GM12878 (cell line): ENCODE measurements at regions of chr16 and their contacts with region 1.

Region 1: DNA sequence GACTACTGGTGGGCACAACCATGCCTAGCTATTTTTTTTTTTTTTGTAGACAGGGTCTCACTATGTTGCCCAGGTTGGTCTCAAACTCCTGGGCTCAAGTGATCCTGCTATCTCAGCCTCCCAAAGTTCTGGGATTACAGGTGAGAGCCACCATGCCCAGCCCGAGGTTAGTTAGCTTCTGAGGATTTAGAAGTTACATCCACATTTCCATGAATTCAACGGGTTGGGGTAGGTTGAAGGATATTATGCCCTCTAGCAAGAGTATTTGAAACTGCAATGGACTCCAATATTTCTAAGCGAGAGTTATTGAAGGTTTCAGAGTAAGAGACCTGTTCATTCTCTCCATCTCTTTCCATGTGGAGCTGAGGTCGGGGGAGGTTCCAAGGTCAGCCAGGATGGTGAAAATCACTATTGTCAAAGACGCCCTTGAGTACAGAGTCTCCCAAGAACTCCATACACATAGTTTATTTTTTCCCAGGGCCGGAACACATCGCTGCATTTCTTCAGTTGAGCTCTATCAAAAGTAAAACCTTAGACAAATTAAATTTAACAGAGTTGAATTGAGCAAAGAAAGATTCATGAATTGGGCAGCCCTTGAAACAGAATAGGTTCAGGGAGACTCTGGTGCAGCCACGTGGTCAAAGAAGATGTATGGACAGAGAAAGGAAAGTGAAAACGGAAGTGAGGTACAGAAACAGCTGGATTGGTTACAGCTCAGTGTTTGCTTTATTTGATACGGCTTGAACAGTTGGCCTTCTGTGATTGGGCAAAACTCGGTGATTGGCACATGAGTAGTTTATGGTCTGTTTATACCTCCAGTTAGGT is 19.0 kb upstream of the ITPRIPL2 start:
- DNase-seq: no peak
- ATAC-seq: peak; percentile 88
- H3K4me3 ChIP-seq: no peak overlapping the region
- H3K27ac ChIP-seq: no peak overlapping the region
- H3K4me1 ChIP-seq: peaks cover 6% of the 10 kb centered on the region; the same call in 1 of the 2 replicates
- H3K27me3 ChIP-seq: no peaks in the 10 kb centered on the region
- CTCF ChIP-seq: no peak
- EP300 ChIP-seq: no peak
- POLR2A ChIP-seq: no peak
- RAD21 ChIP-seq: no peak

Region 2: GRCh38 chr16:18932243-18932981 is 162.3 kb before region 1 on chr16:
- CTCF ChIA-PET with region 1: no interaction called
- POLR2A ChIA-PET with region 1: no interaction called
- RAD21 ChIA-PET with region 1: no interaction called
- SMC1A ChIA-PET with region 1: no interaction called
- in situ Hi-C with region 1: no loop called
- intact Hi-C with region 1: no loop called
- DNase-seq: no peak
- ATAC-seq: no peak
- H3K4me3 ChIP-seq: no peak overlapping the region
- H3K27ac ChIP-seq: no peak overlapping the region
- H3K4me1 ChIP-seq: peaks cover 6% of the 10 kb centered on the region
- H3K27me3 ChIP-seq: no peaks in the 10 kb centered on the region
- CTCF ChIP-seq: no peak
- EP300 ChIP-seq: no peak
- POLR2A ChIP-seq: no peak
- RAD21 ChIP-seq: no peak

Region 3: GRCh38 chr16:19046062-19046461 is 48.7 kb before region 1 on chr16:
- CTCF ChIA-PET with region 1: no interaction called
- POLR2A ChIA-PET with region 1: no interaction called
- RAD21 ChIA-PET with region 1: no interaction called
- SMC1A ChIA-PET with region 1: no interaction called
- in situ Hi-C with region 1: no loop called
- intact Hi-C with region 1: no loop called
- DNase-seq: no peak
- ATAC-seq: no peak
- H3K4me3 ChIP-seq: no peak overlapping the region
- H3K27ac ChIP-seq: no peak overlapping the region
- H3K4me1 ChIP-seq: no peaks in the 10 kb centered on the region
- H3K27me3 ChIP-seq: no peaks in the 10 kb centered on the region
- CTCF ChIP-seq: no peak
- EP300 ChIP-seq: no peak
- POLR2A ChIP-seq: no peak
- RAD21 ChIP-seq: no peak

Region 4: GRCh38 chr16:19105891-19106624 is 11.3 kb after region 1 on chr16:
- CTCF ChIA-PET with region 1: interaction called, 7 read pairs
- POLR2A ChIA-PET with region 1: no interaction called
- RAD21 ChIA-PET with region 1: interaction called, 4 read pairs
- SMC1A ChIA-PET with region 1: interaction called, 34 read pairs
- in situ Hi-C with region 1: no loop called
- intact Hi-C with region 1: no loop called
- DNase-seq: no peak
- ATAC-seq: no peak
- H3K4me3 ChIP-seq: no peak overlapping the region
- H3K27ac ChIP-seq: no peak overlapping the region
- H3K4me1 ChIP-seq: peaks cover 24% of the 10 kb centered on the region
- H3K27me3 ChIP-seq: no peaks in the 10 kb centered on the region
- CTCF ChIP-seq: no peak
- EP300 ChIP-seq: no peak
- POLR2A ChIP-seq: no peak
- RAD21 ChIP-seq: no peak

Region 5: GRCh38 chr16:19162085-19162484 is 67.3 kb after region 1 on chr16:
- CTCF ChIA-PET with region 1: no interaction called
- POLR2A ChIA-PET with region 1: no interaction called
- RAD21 ChIA-PET with region 1: no interaction called
- SMC1A ChIA-PET with region 1: interaction called, 4 read pairs
- in situ Hi-C with region 1: loop called (anchors 5 kb)
- intact Hi-C with region 1: no loop called
- DNase-seq: no peak
- ATAC-seq: no peak
- H3K4me3 ChIP-seq: no peak overlapping the region
- H3K27ac ChIP-seq: no peak overlapping the region
- H3K4me1 ChIP-seq: no peaks in the 10 kb centered on the region
- H3K27me3 ChIP-seq: no peaks in the 10 kb centered on the region
- CTCF ChIP-seq: no peak
- EP300 ChIP-seq: no peak
- POLR2A ChIP-seq: no peak
- RAD21 ChIP-seq: no peak

Region 6: DNA sequence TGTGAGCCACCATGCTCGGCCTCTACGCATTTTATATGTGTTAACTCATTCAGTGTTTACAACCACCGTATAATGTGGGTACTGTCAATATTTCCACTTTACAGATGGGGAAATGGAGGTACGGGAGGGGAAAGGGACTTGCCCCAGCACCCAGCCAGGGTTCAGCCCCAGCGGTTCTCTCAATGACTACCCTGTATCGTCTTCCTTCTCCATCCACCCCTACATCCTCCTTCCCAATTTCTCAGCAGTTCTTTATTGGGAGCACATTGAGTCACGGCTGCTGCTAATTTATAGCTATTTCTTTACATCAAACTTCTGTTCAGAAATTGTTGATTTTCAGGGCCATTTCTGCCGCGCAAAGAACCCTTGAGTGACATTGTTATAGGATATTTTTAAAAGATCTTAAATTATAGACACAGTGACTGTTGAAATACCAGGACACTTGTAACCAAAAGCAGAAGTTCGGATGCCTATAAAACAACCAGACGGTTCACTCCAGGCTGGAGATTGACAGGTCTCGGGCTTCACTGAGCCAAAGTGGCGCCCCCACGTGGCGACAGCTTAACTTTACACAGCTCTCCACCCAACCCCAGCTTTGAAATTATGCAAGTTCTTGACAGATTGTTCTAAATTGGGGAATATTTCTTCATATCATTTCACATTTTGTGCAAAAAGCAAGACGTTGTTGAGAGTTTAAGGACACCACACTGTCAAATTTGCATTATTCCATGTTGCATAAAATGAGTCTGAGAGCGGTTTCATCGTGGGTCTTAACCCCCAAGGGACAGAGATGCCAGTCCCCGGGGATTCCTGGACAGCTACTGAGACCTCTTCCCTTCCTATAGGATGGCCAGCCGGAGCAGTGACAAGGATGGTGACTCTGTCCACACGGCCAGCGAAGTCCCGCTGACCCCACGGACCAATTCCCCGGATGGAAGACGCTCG is 85.1 kb after region 1 on chr16:
- CTCF ChIA-PET with region 1: interaction called, 17 read pairs
- POLR2A ChIA-PET with region 1: no interaction called
- RAD21 ChIA-PET with region 1: no interaction called
- SMC1A ChIA-PET with region 1: interaction called, 5 read pairs
- in situ Hi-C with region 1: no loop called
- intact Hi-C with region 1: no loop called
- DNase-seq: no peak
- ATAC-seq: peak; percentile 94
- H3K4me3 ChIP-seq: no peak overlapping the region
- H3K27ac ChIP-seq: no peak overlapping the region
- H3K4me1 ChIP-seq: no peaks in the 10 kb centered on the region
- H3K27me3 ChIP-seq: no peaks in the 10 kb centered on the region
- CTCF ChIP-seq: peak; percentile 61 to 75 (median 68)
- EP300 ChIP-seq: no peak
- POLR2A ChIP-seq: no peak
- RAD21 ChIP-seq: peak; percentile 55